PC-9 (cell line): ENCODE measurements at regions of chr1 and their contacts with region 1.

Region 1: DNA sequence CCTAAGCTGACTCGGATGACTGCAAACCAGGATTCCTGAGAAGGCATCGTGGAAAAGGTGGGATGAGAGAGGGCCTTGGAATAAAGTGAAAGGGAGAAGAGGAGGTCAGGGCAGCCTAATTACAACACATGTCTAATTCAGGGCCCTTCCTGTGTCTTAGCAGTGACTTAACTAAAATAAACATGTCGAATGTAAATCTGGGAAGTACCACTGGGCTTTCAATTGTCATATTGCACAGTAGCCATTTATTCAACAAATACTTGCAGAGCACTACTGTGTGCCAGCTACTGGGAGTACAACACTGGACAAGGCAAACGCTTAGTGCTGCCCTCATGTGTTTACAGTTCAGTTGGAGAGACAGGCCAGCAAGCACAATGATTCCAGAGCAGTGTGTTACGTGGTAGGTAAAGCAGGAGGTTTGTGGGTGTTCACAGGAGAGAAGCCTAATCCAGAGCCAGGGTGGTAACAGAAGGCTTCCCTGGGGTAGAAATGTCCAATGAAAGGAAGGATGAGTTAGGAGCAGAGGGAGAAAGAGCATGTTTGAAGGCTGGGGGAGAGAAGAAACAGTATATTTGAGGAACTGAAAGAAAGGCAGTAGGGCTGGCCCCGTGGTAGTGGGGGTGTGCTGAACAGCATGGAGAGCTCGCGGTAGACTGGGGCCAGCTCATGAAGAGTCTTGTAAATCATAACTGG is 38.0 kb upstream of the RASAL2 start:
- DNase-seq: peak in 1 of 2 experiments; percentile 37
- H3K4me3 ChIP-seq: no peak overlapping the region
- H3K27ac ChIP-seq: no peak overlapping the region
- H3K4me1 ChIP-seq: peaks cover 49% of the 10 kb centered on the region
- H3K27me3 ChIP-seq: no peaks in the 10 kb centered on the region
- CTCF ChIP-seq: no peak

Region 2: GRCh38 chr1:177600936-177601335 is 455.0 kb before region 1 on chr1:
- CTCF ChIA-PET with region 1: no interaction called
- POLR2A ChIA-PET with region 1: no interaction called
- intact Hi-C with region 1: no loop called
- DNase-seq: no peak
- H3K4me3 ChIP-seq: no peak overlapping the region
- H3K27ac ChIP-seq: no peak overlapping the region
- H3K4me1 ChIP-seq: no peaks in the 10 kb centered on the region
- H3K27me3 ChIP-seq: no peaks in the 10 kb centered on the region
- CTCF ChIP-seq: no peak

Region 3: GRCh38 chr1:178031856-178032320 is 24.0 kb before region 1 on chr1:
- CTCF ChIA-PET with region 1: interaction called, 11 read pairs
- POLR2A ChIA-PET with region 1: no interaction called
- intact Hi-C with region 1: loop called (anchors 1 kb)
- DNase-seq: peak; percentile 86 to 87
- H3K4me3 ChIP-seq: no peak overlapping the region
- H3K27ac ChIP-seq: peak overlapping the region; percentile 46
- H3K4me1 ChIP-seq: peaks cover 20% of the 10 kb centered on the region
- H3K27me3 ChIP-seq: no peaks in the 10 kb centered on the region
- CTCF ChIP-seq: peak; percentile 91

Region 4: DNA sequence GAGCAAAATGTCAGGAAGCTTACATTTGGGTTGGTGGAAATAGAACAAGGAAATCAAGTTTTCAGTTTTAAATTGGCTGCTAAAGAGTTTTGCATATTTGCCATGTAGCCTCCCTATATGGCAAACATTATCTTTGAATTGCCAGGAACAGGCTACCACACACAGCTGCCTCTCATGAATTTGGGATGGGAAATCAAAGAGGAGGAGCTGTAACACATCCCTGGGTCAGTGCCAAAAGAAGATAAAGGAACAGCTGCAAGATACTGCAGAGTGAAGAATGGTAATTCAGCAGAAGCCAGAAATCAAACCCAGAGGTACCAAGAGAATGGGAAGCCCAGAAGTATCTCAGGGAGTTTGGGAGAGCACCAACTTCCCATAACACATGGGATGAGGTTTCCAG is 19.4 kb after region 1 on chr1:
- CTCF ChIA-PET with region 1: no interaction called
- POLR2A ChIA-PET with region 1: no interaction called
- intact Hi-C with region 1: no loop called
- DNase-seq: no peak
- H3K4me3 ChIP-seq: no peak overlapping the region
- H3K27ac ChIP-seq: no peak overlapping the region
- H3K4me1 ChIP-seq: no peaks in the 10 kb centered on the region
- H3K27me3 ChIP-seq: no peaks in the 10 kb centered on the region
- CTCF ChIP-seq: no peak

Region 5: GRCh38 chr1:178189814-178190213 is 133.9 kb after region 1 on chr1:
- CTCF ChIA-PET with region 1: no interaction called
- POLR2A ChIA-PET with region 1: no interaction called
- intact Hi-C with region 1: loop called (anchors 5 kb)
- DNase-seq: no peak
- H3K4me3 ChIP-seq: no peak overlapping the region
- H3K27ac ChIP-seq: no peak overlapping the region
- H3K4me1 ChIP-seq: peaks cover 8% of the 10 kb centered on the region; the same call in 1 of the 2 replicates
- H3K27me3 ChIP-seq: no peaks in the 10 kb centered on the region
- CTCF ChIP-seq: peak; percentile 52

Region 6: GRCh38 chr1:178300352-178300699 is 244.4 kb after region 1 on chr1:
- CTCF ChIA-PET with region 1: no interaction called
- POLR2A ChIA-PET with region 1: no interaction called
- intact Hi-C with region 1: loop called (anchors 1 kb)
- DNase-seq: no peak
- H3K4me3 ChIP-seq: no peak overlapping the region
- H3K27ac ChIP-seq: no peak overlapping the region
- H3K4me1 ChIP-seq: peaks cover 9% of the 10 kb centered on the region; the same call in 1 of the 2 replicates
- H3K27me3 ChIP-seq: no peaks in the 10 kb centered on the region
- CTCF ChIP-seq: no peak